Activated CD4-positive, alpha-beta T cell treated with anti-CD3 and anti-CD28 coated beads, Interleukin-2, amount 10 ng/mL, durations not matched to agents 7 days and 5 days (primary cell): ENCODE measurements at regions of chr11 and their contacts with region 1.

Region 1: DNA sequence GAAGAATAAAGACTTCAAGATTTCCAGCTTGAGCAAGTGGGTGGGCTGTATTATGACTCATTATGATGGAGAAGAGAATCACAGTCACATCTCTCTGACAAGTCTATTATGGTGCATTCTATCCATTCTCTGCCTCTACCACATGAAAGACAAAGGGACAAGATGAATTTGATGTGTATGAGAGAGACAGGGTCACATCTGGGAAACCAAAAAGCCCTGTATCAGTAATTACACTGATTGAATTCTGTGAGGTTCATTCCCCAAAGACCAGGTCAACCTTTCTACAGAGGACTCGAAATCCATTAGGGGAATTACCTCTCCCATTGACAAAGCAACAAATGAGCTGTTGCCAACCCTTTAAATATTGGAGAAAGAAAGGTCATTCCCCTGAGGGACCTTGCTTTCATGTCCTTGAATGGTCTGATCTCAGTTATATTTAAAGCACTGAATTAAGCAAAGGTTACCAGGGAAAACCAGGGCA is 109.6 kb downstream of the USP35 start:
- DNase-seq: no peak
- H3K4me3 Mint-ChIP-seq: no peak overlapping the region
- H3K27ac Mint-ChIP-seq: no peak overlapping the region
- H3K4me1 Mint-ChIP-seq: peaks cover 17% of the 10 kb centered on the region
- H3K27me3 Mint-ChIP-seq: no peaks in the 10 kb centered on the region

Region 2: GRCh38 chr11:78313181-78313795 is 15.0 kb after region 1 on chr11:
- CTCF ChIA-PET with region 1: interaction called, 11 read pairs
- POLR2A ChIA-PET with region 1: no interaction called
- DNase-seq: no peak
- H3K4me3 Mint-ChIP-seq: no peak overlapping the region
- H3K27ac Mint-ChIP-seq: no peak overlapping the region
- H3K4me1 Mint-ChIP-seq: peaks cover 41% of the 10 kb centered on the region
- H3K27me3 Mint-ChIP-seq: no peaks in the 10 kb centered on the region